Heart left ventricle (tissue), 16 donors: ENCODE measurements at regions of chr3 and their contacts with region 1.

Region 1: GRCh38 chr3:30611613-30612436 is 5.4 kb downstream of the TGFBR2 start:
- DNase-seq: no peak
- ATAC-seq: no peak
- H3K4me3 ChIP-seq: peak overlapping the region in 4 of 12 donors; percentile 10 to 98 (median 94)
- H3K27ac ChIP-seq: peak overlapping the region in 9 of 12 donors; percentile 2 to 100 (median 47)
- H3K4me1 ChIP-seq: peaks cover 5 to 89% (median 79%) of the 10 kb centered on the region in 12 donors
- H3K27me3 ChIP-seq: no peaks in the 10 kb centered on the region
- CTCF ChIP-seq: no peak
- POLR2A ChIP-seq: no peak

Region 2: DNA sequence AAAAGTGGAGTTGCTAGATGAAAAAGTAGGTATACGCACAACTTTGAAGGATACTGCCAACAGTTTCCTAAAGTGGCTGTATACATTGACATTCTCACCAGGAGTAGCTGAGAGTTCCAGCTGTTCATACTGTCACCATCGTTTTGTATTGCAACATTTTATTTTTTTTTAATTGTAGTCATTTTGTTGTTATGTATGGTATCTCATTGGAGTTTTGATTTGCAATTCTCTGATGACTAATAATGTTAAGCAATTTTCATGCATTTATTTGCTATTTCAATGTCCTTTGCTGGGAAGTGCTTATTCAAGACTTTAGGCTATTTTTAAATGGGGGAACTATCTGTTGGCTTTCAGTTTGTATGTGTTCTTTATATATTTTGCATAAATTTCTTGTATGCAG is 190.6 kb before region 1 on chr3:
- intact Hi-C with region 1: no loop called
- DNase-seq: no peak
- ATAC-seq: peak in 1 of 4 donors; percentile 52
- H3K4me3 ChIP-seq: no peak overlapping the region
- H3K27ac ChIP-seq: peak overlapping the region in 1 of 12 donors; percentile 11
- H3K4me1 ChIP-seq: peaks cover 0 to 15% (median 6%) of the 10 kb centered on the region in 12 donors
- H3K27me3 ChIP-seq: no peaks in the 10 kb centered on the region
- CTCF ChIP-seq: no peak
- POLR2A ChIP-seq: no peak

Region 3: DNA sequence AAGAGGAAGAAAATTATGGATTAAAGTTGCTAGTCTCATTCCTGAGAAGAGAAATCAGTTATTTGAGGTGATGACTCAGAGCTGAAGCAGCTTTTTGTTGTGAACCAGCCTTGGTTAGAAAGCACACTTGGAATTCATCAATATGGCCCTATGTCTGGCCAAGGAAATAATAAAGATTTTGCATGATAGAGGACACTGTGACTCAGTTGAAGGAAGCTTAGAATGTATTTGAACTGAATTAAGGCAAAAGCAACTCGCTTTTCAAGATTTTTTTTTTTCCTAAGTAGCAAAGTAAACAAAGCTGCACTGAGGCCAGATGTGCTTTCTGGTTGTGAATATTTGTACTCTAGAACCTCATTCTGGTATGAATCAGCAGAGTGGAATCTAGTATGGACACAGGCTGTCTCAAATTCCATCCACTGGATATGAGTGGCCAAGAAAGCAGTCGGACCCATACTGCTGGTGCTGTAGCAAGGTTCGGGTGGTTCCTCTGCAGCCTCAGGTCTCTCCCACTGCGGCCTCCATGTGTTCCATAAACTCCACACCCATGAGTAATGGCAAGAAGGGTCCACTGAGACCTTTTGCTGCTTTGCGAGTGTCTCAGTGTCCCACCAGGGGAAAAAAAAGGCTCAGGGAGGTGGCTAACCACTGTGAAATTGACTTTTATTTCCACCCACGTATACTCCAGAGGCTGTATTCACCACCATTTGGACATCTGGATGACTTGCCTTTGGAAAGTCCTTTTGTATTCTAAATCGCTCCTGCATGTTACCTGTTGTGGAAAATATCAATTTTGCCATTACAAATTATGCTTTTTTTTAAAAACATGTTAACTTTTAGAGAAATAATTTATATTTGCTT is 47.7 kb after region 1 on chr3:
- intact Hi-C with region 1: loop called in 1 of 10 experiments (anchors 10 kb)
- DNase-seq: peak in 1 of 5 donors; percentile 45
- ATAC-seq: peak; percentile 33 to 75 (median 55)
- H3K4me3 ChIP-seq: no peak overlapping the region
- H3K27ac ChIP-seq: peak overlapping the region; percentile 53 to 92 (median 64)
- H3K4me1 ChIP-seq: peaks cover 19 to 99% (median 85%) of the 10 kb centered on the region in 12 donors
- H3K27me3 ChIP-seq: no peaks in the 10 kb centered on the region
- CTCF ChIP-seq: no peak
- POLR2A ChIP-seq: no peak

Region 4: DNA sequence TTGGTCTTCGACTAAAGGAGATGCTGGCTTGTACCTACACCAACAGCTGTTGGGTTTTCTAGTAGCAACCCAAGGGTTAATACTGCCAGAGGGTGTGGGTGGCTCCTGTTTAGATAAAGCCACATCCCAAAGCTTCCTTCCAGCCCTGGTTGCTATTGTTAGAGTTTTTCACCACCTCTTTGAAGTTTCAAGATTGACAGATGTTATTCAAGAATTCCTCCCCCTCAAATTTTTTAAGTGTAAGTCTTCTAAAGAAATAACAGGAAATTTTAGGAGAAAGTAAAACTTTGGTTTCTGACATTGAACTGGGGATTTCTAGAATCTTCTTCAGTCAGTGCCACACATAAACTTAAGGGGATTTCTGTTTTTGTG is 55.4 kb after region 1 on chr3:
- intact Hi-C with region 1: loop called in 3 of 10 experiments (anchors 5 to 10 kb)
- DNase-seq: no peak
- ATAC-seq: peak in 3 of 4 donors; percentile 27 to 56 (median 36)
- H3K4me3 ChIP-seq: no peak overlapping the region
- H3K27ac ChIP-seq: peak overlapping the region in 10 of 12 donors; percentile 17 to 74 (median 37)
- H3K4me1 ChIP-seq: peaks cover 7 to 79% (median 49%) of the 10 kb centered on the region in 12 donors
- H3K27me3 ChIP-seq: no peaks in the 10 kb centered on the region
- CTCF ChIP-seq: no peak
- POLR2A ChIP-seq: no peak

Region 5: GRCh38 chr3:30672959-30673358 is 61.1 kb after region 1 on chr3:
- intact Hi-C with region 1: loop called in 3 of 10 experiments (anchors 5 to 10 kb)
- DNase-seq: peak in 2 of 5 donors; percentile 29 to 40
- ATAC-seq: peak; percentile 53 to 64 (median 56)
- H3K4me3 ChIP-seq: no peak overlapping the region
- H3K27ac ChIP-seq: peak overlapping the region in 6 of 12 donors; percentile 4 to 53 (median 26)
- H3K4me1 ChIP-seq: peaks cover 3 to 69% (median 36%) of the 10 kb centered on the region in 12 donors
- H3K27me3 ChIP-seq: no peaks in the 10 kb centered on the region
- CTCF ChIP-seq: peak in 1 of 12 donors; percentile 19
- POLR2A ChIP-seq: no peak